Breast epithelium (tissue), 4 donors: ENCODE measurements at regions of chr3 and their contacts with region 1.

Region 1: DNA sequence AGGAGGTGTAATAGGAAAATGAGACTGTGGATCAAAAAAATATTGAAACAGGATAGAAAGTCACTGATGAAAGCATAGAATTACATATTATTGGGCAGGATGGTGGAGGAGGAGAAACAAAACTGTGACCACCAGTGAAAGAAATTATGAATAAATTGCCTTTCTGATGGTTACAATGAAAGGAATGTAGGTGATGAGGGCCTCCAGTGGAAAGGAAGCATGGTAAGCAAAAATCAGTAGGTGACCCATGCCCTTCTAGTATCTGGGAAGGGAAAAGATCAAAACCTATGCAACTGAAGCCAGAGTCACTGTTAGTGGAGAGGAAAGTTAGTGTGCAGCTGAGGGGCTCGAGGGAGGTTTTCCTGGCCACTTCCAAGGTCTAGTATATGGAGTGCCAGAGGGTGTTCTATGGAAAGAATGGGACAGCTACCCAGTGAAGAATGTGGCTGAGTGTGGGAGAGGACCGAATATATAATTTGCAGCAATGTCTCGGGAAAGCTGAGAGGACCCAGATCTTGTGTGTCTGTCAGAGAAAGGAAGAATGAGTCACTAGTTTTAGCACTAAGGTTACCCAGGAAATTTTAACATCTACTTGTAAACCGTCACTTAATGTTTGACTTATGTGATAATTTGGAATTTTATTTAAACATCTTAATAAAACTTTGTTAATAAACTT is 146.2 kb downstream of the NFKBIZ start:
- DNase-seq: no peak
- H3K4me3 ChIP-seq: no peak overlapping the region
- H3K27ac ChIP-seq: no peak overlapping the region
- H3K4me1 ChIP-seq: no peaks in the 10 kb centered on the region
- H3K27me3 ChIP-seq: no peaks in the 10 kb centered on the region
- CTCF ChIP-seq: no peak
- POLR2A ChIP-seq: no peak

Region 2: DNA sequence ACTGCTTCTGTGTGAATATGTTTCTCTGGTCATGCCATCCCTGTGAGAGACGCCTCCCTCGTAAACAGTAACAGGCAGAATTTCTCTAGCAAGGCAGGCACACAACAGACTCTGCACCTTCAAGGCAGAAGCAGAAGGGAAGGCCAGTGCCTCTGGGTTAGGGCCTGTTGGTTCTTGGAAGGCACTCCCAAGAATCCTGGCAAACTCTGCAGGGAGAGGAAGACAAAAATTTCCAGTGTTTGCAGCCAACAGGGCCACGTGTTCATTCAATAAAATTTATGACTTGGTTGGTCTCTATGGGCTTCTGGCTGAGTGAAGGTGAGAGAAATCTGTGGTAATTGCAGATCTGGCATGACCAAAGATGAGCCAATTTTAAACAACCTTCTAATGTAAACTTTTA is 106.9 kb before region 1 on chr3:
- intact Hi-C with region 1: loop called (anchors 5 kb)
- DNase-seq: no peak
- H3K4me3 ChIP-seq: no peak overlapping the region
- H3K27ac ChIP-seq: peak overlapping the region in 1 of 2 donors; percentile 19
- H3K4me1 ChIP-seq: no peaks in the 10 kb centered on the region
- H3K27me3 ChIP-seq: no peaks in the 10 kb centered on the region
- CTCF ChIP-seq: no peak
- POLR2A ChIP-seq: no peak